ENCODE measurements at regions of chr2 and their contacts with region 1.

Region 1: DNA sequence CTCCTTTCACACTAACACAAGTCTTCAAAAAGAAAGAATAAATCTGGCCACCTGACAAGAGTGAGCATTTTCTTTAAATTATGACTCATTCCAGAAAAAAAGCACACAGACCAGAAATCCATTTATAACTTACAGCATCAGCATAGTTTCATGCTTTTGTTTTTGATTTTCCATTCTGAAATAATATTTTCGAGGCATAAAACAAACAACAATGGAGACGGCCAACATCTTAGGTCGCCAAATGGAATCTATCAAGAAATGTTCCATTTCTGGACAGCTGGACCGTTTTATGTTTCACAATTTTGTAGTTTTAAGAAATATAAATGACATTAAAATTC is 165.4 kb upstream of the ZFP36L2 start:
- DNase-seq: no peak
- ATAC-seq: peak in 1 of 2 donors; percentile 37
- H3K4me3 ChIP-seq: no peak overlapping the region
- H3K27ac ChIP-seq: peak overlapping the region; percentile 2 to 26 (median 15)
- H3K4me1 ChIP-seq: peaks cover 26 to 29% of the 10 kb centered on the region in 2 donors
- H3K27me3 ChIP-seq: no peaks in the 10 kb centered on the region
- CTCF ChIP-seq: no peak
- POLR2A ChIP-seq: no peak

Region 2: GRCh38 chr2:43349904-43350303 is 41.9 kb before region 1 on chr2:
- in situ Hi-C with region 1: no loop called
- intact Hi-C with region 1: loop called (anchors 5 kb)
- DNase-seq: no peak
- ATAC-seq: no peak
- H3K4me3 ChIP-seq: no peak overlapping the region
- H3K27ac ChIP-seq: peak overlapping the region; percentile 81 to 88 (median 86)
- H3K4me1 ChIP-seq: peaks cover 41 to 54% of the 10 kb centered on the region in 2 donors
- H3K27me3 ChIP-seq: no peaks in the 10 kb centered on the region
- CTCF ChIP-seq: no peak
- POLR2A ChIP-seq: no peak

Region 3: DNA sequence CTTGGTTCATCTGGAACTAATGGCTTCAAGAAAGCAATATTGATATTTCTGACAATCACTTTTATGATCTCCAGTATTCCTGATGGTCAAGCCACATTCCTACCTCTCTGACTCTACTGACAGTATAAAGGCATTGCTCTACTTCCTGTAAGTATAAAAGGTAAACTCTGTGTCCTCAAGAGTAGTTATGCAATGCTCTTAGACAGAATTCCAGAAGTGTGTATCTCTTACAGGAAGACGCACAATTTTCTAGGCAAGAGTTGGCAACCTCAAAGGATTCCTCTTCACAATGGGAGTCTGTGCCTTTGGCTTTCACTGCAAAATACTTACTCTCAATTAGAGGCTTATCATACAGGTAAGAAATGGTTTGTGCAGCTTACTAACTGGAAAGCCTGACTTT is 103.9 kb after region 1 on chr2:
- in situ Hi-C with region 1: no loop called
- intact Hi-C with region 1: no loop called
- DNase-seq: no peak
- ATAC-seq: no peak
- H3K4me3 ChIP-seq: no peak overlapping the region
- H3K27ac ChIP-seq: no peak overlapping the region
- H3K4me1 ChIP-seq: no peaks in the 10 kb centered on the region
- H3K27me3 ChIP-seq: no peaks in the 10 kb centered on the region
- CTCF ChIP-seq: no peak
- POLR2A ChIP-seq: no peak

Region 4: DNA sequence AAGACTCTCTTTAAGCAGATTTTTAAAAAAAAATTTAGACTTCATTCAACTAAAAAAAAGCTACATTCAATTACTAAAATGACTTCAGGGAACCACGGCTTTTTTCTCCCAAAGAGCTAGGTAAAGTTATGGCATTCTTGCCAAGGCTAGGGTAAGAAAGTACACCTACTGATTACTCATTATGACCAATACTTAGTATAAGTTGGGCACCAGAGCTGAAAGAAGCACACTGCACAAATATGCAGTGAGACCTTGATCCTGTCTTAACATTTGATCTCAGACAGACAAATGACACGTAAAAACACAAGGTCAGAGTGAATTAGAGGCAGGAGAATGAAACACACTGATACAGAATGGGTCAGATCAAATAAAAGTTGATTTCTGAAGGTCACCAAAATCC is 115.3 kb after region 1 on chr2:
- in situ Hi-C with region 1: no loop called
- intact Hi-C with region 1: no loop called
- DNase-seq: no peak
- ATAC-seq: no peak
- H3K4me3 ChIP-seq: no peak overlapping the region
- H3K27ac ChIP-seq: no peak overlapping the region
- H3K4me1 ChIP-seq: no peaks in the 10 kb centered on the region
- H3K27me3 ChIP-seq: no peaks in the 10 kb centered on the region
- CTCF ChIP-seq: no peak
- POLR2A ChIP-seq: no peak

Region 5: GRCh38 chr2:43832457-43832856 is 440.6 kb after region 1 on chr2:
- in situ Hi-C with region 1: no loop called
- intact Hi-C with region 1: no loop called
- DNase-seq: no peak
- ATAC-seq: no peak
- H3K4me3 ChIP-seq: no peak overlapping the region
- H3K27ac ChIP-seq: no peak overlapping the region
- H3K4me1 ChIP-seq: no peaks in the 10 kb centered on the region
- H3K27me3 ChIP-seq: peaks cover 2 to 9% (median 7%) of the 10 kb centered on the region in 3 donors
- CTCF ChIP-seq: no peak
- POLR2A ChIP-seq: no peak